ENCODE measurements at regions of chr5 and their contacts with region 1.

Region 1: GRCh38 chr5:173331956-173332479 is 3.8 kb upstream of the STC2 start:
- DNase-seq: peak; percentile 86
- H3K4me3 ChIP-seq: no peak overlapping the region
- H3K27ac ChIP-seq: no peak overlapping the region
- H3K4me1 ChIP-seq: peaks cover 29% of the 10 kb centered on the region
- H3K27me3 ChIP-seq: no peaks in the 10 kb centered on the region
- CTCF ChIP-seq: peak; percentile 94 to 97
- POLR2A ChIP-seq: no peak

Region 2: DNA sequence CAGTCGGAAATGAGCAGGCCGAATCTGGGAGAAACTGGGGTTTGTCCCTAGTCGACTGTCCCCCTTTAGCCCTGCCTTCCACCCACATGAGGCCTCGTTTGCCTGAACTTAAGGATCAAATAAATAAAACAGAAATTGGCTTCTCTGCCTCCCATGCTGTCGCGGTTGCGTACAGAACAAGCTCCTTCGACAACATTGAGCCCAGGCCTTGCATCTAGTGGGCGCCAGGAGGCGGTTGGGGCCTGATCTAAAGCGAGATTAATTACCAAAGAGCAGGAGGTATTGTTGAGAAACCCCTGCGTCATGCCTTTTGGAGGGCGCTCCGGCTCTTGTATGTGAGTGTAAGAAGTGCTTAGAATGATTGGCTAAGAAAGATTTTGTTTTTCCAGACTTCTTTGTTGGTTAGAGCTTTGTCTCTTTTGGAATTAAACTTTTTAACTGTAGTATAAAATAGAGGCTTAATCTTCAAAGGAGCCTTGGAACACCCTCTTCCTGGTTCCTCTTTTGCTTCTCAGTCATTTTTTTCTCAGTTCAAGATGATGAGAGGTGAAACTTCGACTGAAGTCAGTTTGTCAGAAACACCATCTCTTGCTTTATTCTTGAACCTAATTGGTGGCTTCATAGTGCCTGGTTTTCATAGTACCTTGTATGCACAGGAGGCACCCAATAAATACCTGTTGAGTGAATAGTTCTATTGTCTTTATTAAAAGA is 347.6 kb before region 1 on chr5:
- CTCF ChIA-PET with region 1: interaction called, 20 read pairs
- POLR2A ChIA-PET with region 1: no interaction called
- dilution Hi-C with region 1: no loop called
- intact Hi-C with region 1: loop called (anchors 1 kb)
- DNase-seq: peak; percentile 92
- H3K4me3 ChIP-seq: peak overlapping the region; percentile 42 to 93 (median 92)
- H3K27ac ChIP-seq: peak overlapping the region; percentile 81
- H3K4me1 ChIP-seq: peaks cover 13% of the 10 kb centered on the region
- H3K27me3 ChIP-seq: no peaks in the 10 kb centered on the region
- CTCF ChIP-seq: peak; percentile 64 to 75
- POLR2A ChIP-seq: no peak

Region 3: GRCh38 chr5:173016621-173017047 is 315.4 kb before region 1 on chr5:
- CTCF ChIA-PET with region 1: no interaction called
- POLR2A ChIA-PET with region 1: no interaction called
- dilution Hi-C with region 1: no loop called
- intact Hi-C with region 1: no loop called
- DNase-seq: peak; percentile 76
- H3K4me3 ChIP-seq: no peak overlapping the region
- H3K27ac ChIP-seq: peak overlapping the region; percentile 13
- H3K4me1 ChIP-seq: peaks cover 11% of the 10 kb centered on the region
- H3K27me3 ChIP-seq: no peaks in the 10 kb centered on the region
- CTCF ChIP-seq: no peak
- POLR2A ChIP-seq: no peak

Region 4: GRCh38 chr5:173165177-173166016 is 166.6 kb before region 1 on chr5:
- CTCF ChIA-PET with region 1: interaction called, 9 read pairs
- POLR2A ChIA-PET with region 1: no interaction called
- dilution Hi-C with region 1: no loop called
- intact Hi-C with region 1: loop called (anchors 1 kb)
- DNase-seq: no peak
- H3K4me3 ChIP-seq: no peak overlapping the region
- H3K27ac ChIP-seq: no peak overlapping the region
- H3K4me1 ChIP-seq: no peaks in the 10 kb centered on the region
- H3K27me3 ChIP-seq: no peaks in the 10 kb centered on the region
- CTCF ChIP-seq: no peak
- POLR2A ChIP-seq: no peak

Region 5: DNA sequence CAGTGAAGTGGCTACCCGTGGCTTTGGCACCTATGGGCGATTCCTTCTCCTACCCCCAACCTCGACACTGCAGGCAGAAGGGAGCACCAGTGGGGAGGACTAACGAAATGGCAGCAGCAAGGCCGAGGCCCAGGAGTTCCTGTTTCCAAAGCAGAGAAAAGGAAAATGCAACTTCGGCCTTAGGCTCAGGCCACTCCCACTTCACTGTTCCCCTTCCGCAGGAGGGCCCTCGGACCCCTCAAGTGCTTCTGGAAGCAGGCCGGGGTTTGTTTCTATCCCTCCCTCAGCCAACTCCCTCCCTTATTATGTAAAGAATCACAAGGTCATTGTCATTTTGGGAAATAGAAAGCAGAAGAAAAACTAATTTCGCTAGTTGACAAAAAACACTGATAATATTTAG is 60.6 kb before region 1 on chr5:
- CTCF ChIA-PET with region 1: no interaction called
- POLR2A ChIA-PET with region 1: no interaction called
- dilution Hi-C with region 1: no loop called
- intact Hi-C with region 1: no loop called
- DNase-seq: no peak
- H3K4me3 ChIP-seq: no peak overlapping the region
- H3K27ac ChIP-seq: no peak overlapping the region
- H3K4me1 ChIP-seq: no peaks in the 10 kb centered on the region
- H3K27me3 ChIP-seq: peaks cover 6 to 8% of the 10 kb centered on the region in 2 experiments
- CTCF ChIP-seq: no peak
- POLR2A ChIP-seq: no peak

Region 6: DNA sequence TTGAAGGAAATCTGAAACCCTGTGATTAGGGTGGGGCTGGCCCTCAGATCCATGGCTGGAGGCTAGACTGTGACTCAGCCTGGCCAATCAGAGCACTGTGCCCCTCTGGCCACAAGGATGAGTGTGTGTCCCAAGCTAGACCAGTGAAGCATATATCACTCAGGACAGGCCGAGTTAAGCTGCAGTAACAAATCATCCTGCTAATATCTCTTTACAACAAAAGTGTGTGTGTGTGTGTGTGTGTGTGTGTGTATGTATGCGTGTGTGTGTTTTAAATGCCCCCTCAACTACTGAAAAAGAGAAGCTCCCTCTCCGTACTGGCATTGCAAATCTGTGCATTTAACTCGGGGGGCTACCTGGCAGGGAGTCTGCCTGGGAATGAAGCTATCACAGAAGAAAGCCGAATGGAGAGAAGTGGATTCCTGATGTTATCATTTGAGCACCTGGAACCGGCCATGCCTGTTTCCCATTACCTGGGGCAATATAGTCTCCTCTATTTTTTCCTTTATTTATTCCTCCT is 29.4 kb before region 1 on chr5:
- CTCF ChIA-PET with region 1: interaction called, 428 read pairs
- POLR2A ChIA-PET with region 1: no interaction called
- dilution Hi-C with region 1: no loop called
- intact Hi-C with region 1: no loop called
- DNase-seq: no peak
- H3K4me3 ChIP-seq: no peak overlapping the region
- H3K27ac ChIP-seq: no peak overlapping the region
- H3K4me1 ChIP-seq: peaks cover 10% of the 10 kb centered on the region
- H3K27me3 ChIP-seq: no peaks in the 10 kb centered on the region
- CTCF ChIP-seq: no peak
- POLR2A ChIP-seq: no peak

Region 7: DNA sequence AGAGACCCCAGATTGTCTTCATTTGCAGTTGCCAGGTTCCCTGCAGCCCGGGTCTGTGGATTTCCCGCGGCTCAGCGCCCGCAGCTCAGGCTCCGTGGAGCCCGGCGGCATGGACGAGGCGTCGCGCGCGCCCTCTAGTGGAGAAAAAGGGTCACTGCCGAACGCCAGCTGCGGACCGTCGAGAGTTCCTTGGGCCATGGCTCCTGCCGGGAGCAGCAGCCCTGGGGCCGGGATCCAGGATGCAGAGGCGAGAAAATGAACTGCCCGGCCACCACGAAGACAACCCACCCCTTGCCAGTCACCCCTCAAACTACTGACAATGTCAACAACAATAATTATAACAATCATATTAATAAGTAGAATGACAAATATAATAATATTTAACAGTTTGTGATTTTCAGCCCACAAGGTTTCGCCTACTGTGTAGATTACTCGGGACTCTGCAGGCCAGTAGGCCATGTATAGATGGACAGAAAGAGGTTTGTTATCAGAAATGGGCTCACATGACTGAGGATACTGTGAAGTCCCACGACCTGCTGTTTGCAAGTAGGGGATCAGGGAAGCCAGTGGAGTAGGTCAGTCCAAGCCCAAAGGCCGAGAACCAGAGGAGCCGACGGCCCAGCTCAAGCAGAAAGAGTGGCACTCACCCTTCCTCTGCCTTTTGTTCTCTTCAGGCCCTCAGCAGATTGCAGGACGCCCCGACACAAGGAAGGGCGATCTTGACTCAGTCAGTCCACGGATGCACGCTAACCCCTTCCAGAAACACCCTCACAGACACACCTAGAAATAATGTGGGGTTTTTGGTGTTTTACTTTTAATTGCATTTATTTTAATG is 241.3 kb after region 1 on chr5:
- CTCF ChIA-PET with region 1: interaction called, 26 read pairs
- POLR2A ChIA-PET with region 1: no interaction called
- dilution Hi-C with region 1: no loop called
- intact Hi-C with region 1: loop called (anchors 1 kb)
- DNase-seq: peak; percentile 65
- H3K4me3 ChIP-seq: no peak overlapping the region
- H3K27ac ChIP-seq: no peak overlapping the region
- H3K4me1 ChIP-seq: peaks cover 2% of the 10 kb centered on the region
- H3K27me3 ChIP-seq: peaks cover 0 to 4% of the 10 kb centered on the region in 2 experiments
- CTCF ChIP-seq: peak; percentile 94 to 98
- POLR2A ChIP-seq: no peak

Region 8: DNA sequence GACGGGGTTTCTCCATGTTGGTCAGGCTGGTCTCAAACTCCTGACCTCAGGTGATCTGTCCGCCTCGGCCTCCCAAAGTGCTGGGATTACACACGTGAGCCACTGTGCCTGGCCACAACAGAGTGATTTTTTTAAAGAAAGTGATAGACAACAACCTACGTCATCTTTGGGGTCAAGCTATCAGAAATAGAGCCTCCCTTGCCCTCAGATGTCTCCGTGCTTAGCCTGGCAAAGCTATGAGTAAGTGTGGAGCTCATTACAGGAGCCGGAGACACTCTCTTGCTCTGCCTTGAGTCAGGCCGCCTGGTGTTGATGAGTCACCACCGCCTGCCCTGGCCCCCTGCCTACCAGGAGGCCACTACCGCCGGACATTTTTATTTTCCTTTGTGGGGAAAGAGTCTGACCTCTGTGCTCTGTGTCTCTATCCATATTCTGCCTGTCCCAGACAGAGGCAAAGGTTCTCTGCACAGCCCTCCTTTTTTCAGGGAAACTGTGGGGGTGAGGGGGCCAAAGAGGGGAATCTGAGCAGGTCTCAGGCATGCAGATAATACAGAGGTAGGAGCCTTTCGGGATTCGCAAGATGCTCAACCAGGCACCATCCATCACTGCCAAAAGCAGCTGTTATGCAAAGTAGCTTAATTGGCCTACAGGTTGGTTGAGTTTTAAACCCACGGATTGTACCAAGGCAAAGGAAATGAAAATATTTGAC is 432.5 kb after region 1 on chr5:
- CTCF ChIA-PET with region 1: interaction called, 3 read pairs
- POLR2A ChIA-PET with region 1: no interaction called
- dilution Hi-C with region 1: no loop called
- intact Hi-C with region 1: loop called (anchors 10 kb)
- DNase-seq: peak; percentile 92
- H3K4me3 ChIP-seq: peak overlapping the region in 1 of 3 experiments; percentile 20
- H3K27ac ChIP-seq: peak overlapping the region; percentile 91
- H3K4me1 ChIP-seq: peaks cover 27% of the 10 kb centered on the region
- H3K27me3 ChIP-seq: no peaks in the 10 kb centered on the region
- CTCF ChIP-seq: no peak
- POLR2A ChIP-seq: no peak

Measured in endothelial cell of umbilical vein (primary cell).